ENCODE measurements at regions of chr21 and their contacts with region 1.

Region 1: GRCh38 chr21:43929217-43930025 is 64.4 kb downstream of the AGPAT3 start:
- DNase-seq: no peak
- H3K4me3 ChIP-seq: no peak overlapping the region
- H3K4me1 ChIP-seq: peaks cover 9% of the 10 kb centered on the region
- H3K27me3 ChIP-seq: no peaks in the 10 kb centered on the region

Region 2: DNA sequence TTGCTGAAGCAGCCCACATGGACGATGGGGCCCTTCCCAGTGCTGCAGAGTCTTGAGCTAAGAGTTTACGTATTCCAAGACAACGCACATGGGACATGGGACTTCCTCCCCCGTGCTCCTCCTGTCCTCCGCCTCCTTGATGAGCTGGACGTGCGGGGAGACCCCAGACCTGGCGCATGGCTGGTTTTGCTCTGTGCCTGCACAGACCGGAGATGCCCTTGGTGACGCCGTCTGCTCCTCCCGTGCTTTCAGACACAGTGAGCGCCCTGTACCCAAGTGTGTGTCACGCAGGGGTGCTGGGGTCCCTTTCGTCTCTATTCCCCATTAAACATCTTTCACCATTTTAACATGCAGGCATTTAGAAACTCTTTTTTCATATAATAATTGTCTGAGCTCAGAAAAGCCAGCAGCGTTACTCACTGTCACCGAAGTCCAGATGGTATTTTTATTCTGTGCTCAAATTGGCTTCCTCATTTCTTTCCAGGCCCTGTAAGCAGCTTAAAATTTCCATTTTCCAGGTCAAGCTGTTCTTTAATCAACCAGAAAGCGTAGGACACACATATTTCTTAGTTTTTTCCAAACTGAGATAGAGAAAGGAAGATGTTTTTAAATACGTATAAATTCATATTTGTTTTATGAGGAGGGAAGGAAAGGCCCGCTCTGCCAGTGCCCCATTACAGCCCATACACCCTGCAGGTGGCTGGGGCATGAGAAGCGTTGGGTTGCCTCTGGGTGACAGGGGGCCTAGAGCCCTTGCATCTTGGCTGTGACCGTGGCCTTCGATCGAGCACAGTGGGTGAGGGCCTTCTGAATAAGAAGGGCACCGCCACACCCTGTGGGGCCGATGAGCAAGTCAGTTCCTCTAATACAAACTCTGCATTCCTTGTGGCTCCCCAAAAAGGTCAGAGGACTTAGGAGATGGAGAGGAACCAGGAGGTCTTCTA is 1901.3 kb before region 1 on chr21:
- in situ Hi-C with region 1: no loop called
- DNase-seq: no peak
- H3K4me3 ChIP-seq: no peak overlapping the region
- H3K4me1 ChIP-seq: no peaks in the 10 kb centered on the region
- H3K27me3 ChIP-seq: no peaks in the 10 kb centered on the region

Region 3: GRCh38 chr21:43687566-43688286 is 241.7 kb before region 1 on chr21:
- in situ Hi-C with region 1: no loop called
- DNase-seq: no peak
- H3K4me3 ChIP-seq: no peak overlapping the region
- H3K4me1 ChIP-seq: no peaks in the 10 kb centered on the region
- H3K27me3 ChIP-seq: no peaks in the 10 kb centered on the region

Region 4: GRCh38 chr21:43879348-43880110 is 49.9 kb before region 1 on chr21:
- in situ Hi-C with region 1: loop called (anchors 5 kb)
- DNase-seq: no peak
- H3K4me3 ChIP-seq: no peak overlapping the region
- H3K4me1 ChIP-seq: peaks cover 6% of the 10 kb centered on the region; the same call in 1 of the 2 replicates
- H3K27me3 ChIP-seq: no peaks in the 10 kb centered on the region

Region 5: GRCh38 chr21:44854664-44855446 is 925.4 kb after region 1 on chr21:
- in situ Hi-C with region 1: no loop called
- DNase-seq: no peak
- H3K4me3 ChIP-seq: no peak overlapping the region
- H3K4me1 ChIP-seq: no peaks in the 10 kb centered on the region
- H3K27me3 ChIP-seq: no peaks in the 10 kb centered on the region

Measured in HAP-1 (cell line).